ENCODE measurements at regions of chr10 and their contacts with region 1.

Region 1: DNA sequence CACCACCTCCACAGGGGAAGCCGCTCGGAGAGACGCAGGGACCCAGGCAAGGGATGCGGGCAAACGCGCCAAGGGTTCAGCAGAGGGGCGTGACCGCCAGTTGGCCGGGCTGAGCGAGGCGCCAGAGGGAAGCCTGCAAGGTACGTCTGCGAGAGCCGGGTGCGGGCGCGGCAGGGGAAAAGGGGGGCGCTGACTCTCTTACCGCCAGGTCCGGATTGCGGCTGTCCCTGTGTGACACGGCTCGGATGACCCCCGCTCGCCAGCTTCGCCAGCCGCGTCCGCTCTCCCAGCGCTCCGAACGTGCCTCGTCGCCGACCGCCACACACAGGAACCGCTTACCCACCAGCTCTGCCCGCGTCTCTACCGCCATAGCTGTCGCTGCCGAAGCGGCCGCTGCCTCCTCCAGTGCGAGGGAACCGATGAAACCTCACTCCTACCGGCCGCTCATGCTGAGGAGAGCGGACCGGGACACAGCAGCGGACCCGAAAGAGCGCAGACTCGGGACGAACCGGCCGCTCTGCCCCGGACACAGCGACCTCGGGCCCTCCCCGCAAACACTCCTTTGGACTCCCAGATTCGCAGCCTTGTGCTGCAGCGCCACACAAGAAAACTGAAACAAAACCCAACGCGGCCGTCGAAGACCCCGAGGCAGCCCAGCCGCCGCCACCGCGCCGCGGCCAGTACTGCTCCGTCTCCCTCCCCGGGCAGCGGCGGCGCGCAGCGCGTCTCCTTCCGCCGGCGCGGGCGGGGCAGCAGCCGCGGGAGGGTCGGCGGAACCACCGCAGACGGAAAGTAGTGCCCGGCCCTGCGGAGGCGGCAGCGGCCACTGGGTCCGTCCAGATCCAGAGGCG is at the start of gene JMJD1C:
- DNase-seq: peak; percentile 44 to 81 (median 58)
- H3K4me3 ChIP-seq: peak within 1 kb of the TSS; percentile 67 to 98 (median 84)
- H3K27ac ChIP-seq: peak within 1 kb of the TSS; percentile 53 to 97 (median 90)
- H3K27me3 ChIP-seq: no peaks in the 10 kb centered on the region
- CTCF ChIP-seq: peak in 26 of 56 donors; percentile 3 to 41 (median 10)
- total RNA-seq, gene JMJD1C: 80.5 to 152 (median 104) TPM

Region 2: DNA sequence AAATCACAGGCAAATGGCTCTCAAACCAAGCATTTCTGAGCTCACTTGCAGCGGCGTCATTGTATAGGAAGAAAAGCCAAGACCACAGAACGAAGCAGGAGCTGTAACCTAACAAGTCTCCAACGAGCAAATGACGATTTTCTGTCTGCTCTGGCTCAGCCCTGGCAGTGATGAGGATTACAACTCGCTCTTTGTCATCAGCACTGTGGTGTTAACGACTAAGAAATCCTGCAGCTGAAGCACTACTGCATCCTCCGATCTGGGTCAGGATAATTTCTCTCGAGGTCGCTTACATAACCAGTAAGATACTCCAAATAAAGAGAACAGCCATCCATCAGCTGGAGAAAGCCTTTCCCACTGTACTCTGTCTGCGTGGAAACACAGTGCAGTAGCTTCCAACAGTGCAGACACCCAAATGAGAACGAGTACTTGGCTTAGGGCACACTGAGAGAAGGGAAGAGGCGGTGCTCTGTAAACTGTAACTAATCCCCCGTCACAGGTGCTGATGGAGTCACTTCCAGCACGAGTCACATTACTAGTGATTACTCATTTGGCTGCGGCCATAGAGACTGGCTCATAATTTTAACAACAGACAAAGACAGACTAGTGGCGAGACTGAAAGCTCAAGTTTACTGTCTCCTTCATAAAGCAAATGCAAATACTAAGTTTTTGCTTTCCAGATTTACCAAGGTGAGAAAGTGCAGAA is 196.6 kb before region 1 on chr10:
- intact Hi-C with region 1: loop called in 1 of 2 experiments (anchors 10 kb)
- DNase-seq: peak in 9 of 10 donors; percentile 53 to 88 (median 67)
- H3K4me3 ChIP-seq: peak overlapping the region; percentile 36 to 76 (median 60)
- H3K27ac ChIP-seq: peak overlapping the region; percentile 45 to 97 (median 92)
- H3K27me3 ChIP-seq: no peaks in the 10 kb centered on the region
- CTCF ChIP-seq: peak in 45 of 56 donors; percentile 10 to 61 (median 35)

Region 3: GRCh38 chr10:63757067-63757466 is 291.5 kb after region 1 on chr10:
- intact Hi-C with region 1: no loop called
- DNase-seq: no peak
- H3K4me3 ChIP-seq: no peak overlapping the region
- H3K27ac ChIP-seq: no peak overlapping the region
- H3K27me3 ChIP-seq: no peaks in the 10 kb centered on the region
- CTCF ChIP-seq: no peak

Measured in dorsolateral prefrontal cortex (tissue), 120 donors.